GM12878 (cell line): ENCODE measurements at regions of chr17 and their contacts with region 1.

Region 1: DNA sequence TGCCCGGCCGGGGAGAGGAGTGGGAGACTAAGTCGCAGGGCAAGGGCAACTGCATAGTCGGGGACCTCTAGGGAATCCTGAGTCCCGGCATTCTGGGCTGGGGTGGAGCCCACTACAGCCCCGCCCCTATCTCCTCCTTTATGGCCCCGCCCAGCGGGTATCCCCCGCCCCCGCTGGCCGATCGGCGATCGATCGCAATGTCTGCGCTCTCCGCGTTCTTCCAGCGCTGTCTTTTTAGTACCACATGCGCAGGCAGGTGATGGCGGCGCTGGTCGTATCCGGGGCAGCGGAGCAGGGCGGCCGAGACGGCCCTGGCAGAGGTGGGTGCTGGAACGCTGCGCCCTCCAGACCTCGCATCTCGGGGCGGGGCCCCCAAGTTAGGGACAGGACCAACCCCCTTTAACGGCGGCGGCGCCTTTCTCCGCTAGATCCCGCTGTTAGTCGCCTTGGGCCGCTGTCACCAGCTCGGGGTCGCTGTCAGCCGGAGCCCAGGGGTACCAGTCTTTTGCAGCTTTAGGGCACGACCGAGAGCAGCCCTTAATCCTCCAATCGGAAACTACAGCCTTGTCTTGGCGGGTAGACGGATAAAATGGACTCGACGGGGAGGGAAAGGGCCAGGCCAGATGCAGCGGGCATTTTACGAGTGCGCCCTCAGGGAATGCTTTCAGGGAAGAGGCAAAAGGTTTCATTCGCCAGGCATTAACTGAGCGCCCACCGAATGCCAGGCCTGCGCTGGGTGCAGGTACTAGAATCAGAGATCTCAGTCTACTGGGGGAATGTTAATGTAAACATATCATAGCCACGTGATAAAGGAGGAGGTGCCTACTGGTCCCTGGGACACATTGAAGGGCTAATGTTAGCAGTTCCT is at the start of gene DPH1:
- DNase-seq: peak; percentile 61
- ATAC-seq: peak; percentile 97
- H3K4me3 ChIP-seq: peak within 1 kb of the TSS; percentile 99
- H3K27ac ChIP-seq: peak within 1 kb of the TSS; percentile 51
- H3K4me1 ChIP-seq: peaks cover 11% of the 10 kb centered on the region
- H3K27me3 ChIP-seq: peaks cover 3 to 4% of the 10 kb centered on the region in 2 experiments
- CTCF ChIP-seq: peak in 1 of 3 experiments; percentile 11; a peak in 1 of 6 replicates
- EP300 ChIP-seq: 0 out of 4 replicates have a peak, but pooled peaks of 1 of the 2 experiments have one; percentile 15
- POLR2A ChIP-seq: peak; percentile 86
- RAD21 ChIP-seq: no peak
- polyA plus RNA-seq, gene DPH1: 0.29 to 0.95 TPM

Region 2: GRCh38 chr17:1908699-1909309 is 121.3 kb before region 1 on chr17:
- CTCF ChIA-PET with region 1: interaction called, 12 read pairs
- POLR2A ChIA-PET with region 1: no interaction called
- RAD21 ChIA-PET with region 1: interaction called, 3 read pairs
- SMC1A ChIA-PET with region 1: interaction called, 3 read pairs
- in situ Hi-C with region 1: no loop called
- intact Hi-C with region 1: loop called (anchors 2 kb)
- DNase-seq: no peak
- ATAC-seq: peak; percentile 84
- H3K4me3 ChIP-seq: peak overlapping the region; percentile 11; the same call in 1 of the 2 replicates
- H3K27ac ChIP-seq: no peak overlapping the region
- H3K4me1 ChIP-seq: peaks cover 17% of the 10 kb centered on the region
- H3K27me3 ChIP-seq: no peaks in the 10 kb centered on the region
- CTCF ChIP-seq: peak; percentile 48 to 66 (median 49); a peak in 4 of 6 replicates
- EP300 ChIP-seq: no peak
- POLR2A ChIP-seq: no peak
- RAD21 ChIP-seq: peak; percentile 73

Region 3: GRCh38 chr17:2002767-2003329 is 27.3 kb before region 1 on chr17:
- CTCF ChIA-PET with region 1: no interaction called
- POLR2A ChIA-PET with region 1: no interaction called
- RAD21 ChIA-PET with region 1: no interaction called
- SMC1A ChIA-PET with region 1: no interaction called
- in situ Hi-C with region 1: no loop called
- intact Hi-C with region 1: no loop called
- DNase-seq: no peak
- ATAC-seq: no peak
- H3K4me3 ChIP-seq: no peak overlapping the region
- H3K27ac ChIP-seq: no peak overlapping the region
- H3K4me1 ChIP-seq: no peaks in the 10 kb centered on the region
- H3K27me3 ChIP-seq: peaks cover 0 to 1% of the 10 kb centered on the region in 2 experiments; a peak in 1 of 4 replicates
- CTCF ChIP-seq: no peak
- EP300 ChIP-seq: no peak
- POLR2A ChIP-seq: no peak
- RAD21 ChIP-seq: no peak

Region 4: GRCh38 chr17:2070241-2071023 is 40.3 kb after region 1 on chr17:
- CTCF ChIA-PET with region 1: no interaction called
- POLR2A ChIA-PET with region 1: no interaction called
- RAD21 ChIA-PET with region 1: no interaction called
- SMC1A ChIA-PET with region 1: interaction called, 4 read pairs
- in situ Hi-C with region 1: no loop called
- intact Hi-C with region 1: loop called (anchors 1 kb)
- DNase-seq: peak; percentile 96
- ATAC-seq: peak; percentile 93
- H3K4me3 ChIP-seq: peak overlapping the region; percentile 1; the same call in 1 of the 2 replicates
- H3K27ac ChIP-seq: peak overlapping the region; percentile 95
- H3K4me1 ChIP-seq: peaks cover 43% of the 10 kb centered on the region
- H3K27me3 ChIP-seq: no peaks in the 10 kb centered on the region
- CTCF ChIP-seq: peak in 2 of 3 experiments; percentile 7 to 22; a peak in 1 of 6 replicates
- EP300 ChIP-seq: peak; percentile 96 to 99
- POLR2A ChIP-seq: peak; percentile 79
- RAD21 ChIP-seq: 0 out of 2 replicates have a peak, but pooled peaks have one; percentile 0

Region 5: GRCh38 chr17:2198927-2199326 is 168.8 kb after region 1 on chr17:
- CTCF ChIA-PET with region 1: no interaction called
- POLR2A ChIA-PET with region 1: no interaction called
- RAD21 ChIA-PET with region 1: no interaction called
- SMC1A ChIA-PET with region 1: no interaction called
- in situ Hi-C with region 1: no loop called
- intact Hi-C with region 1: no loop called
- DNase-seq: no peak
- ATAC-seq: no peak
- H3K4me3 ChIP-seq: no peak overlapping the region
- H3K27ac ChIP-seq: no peak overlapping the region
- H3K4me1 ChIP-seq: peaks cover 15% of the 10 kb centered on the region
- H3K27me3 ChIP-seq: no peaks in the 10 kb centered on the region
- CTCF ChIP-seq: no peak
- EP300 ChIP-seq: no peak
- POLR2A ChIP-seq: no peak
- RAD21 ChIP-seq: no peak